SK-N-SH (cell line): ENCODE measurements at regions of chr17 and their contacts with region 1.

Region 1: GRCh38 chr17:82351716-82352488 is 7.1 kb upstream of the TEX19 start:
- DNase-seq: peak; percentile 97
- H3K4me3 ChIP-seq: no peak overlapping the region; a peak in 1 of 4 replicates
- H3K27ac ChIP-seq: no peak overlapping the region
- H3K4me1 ChIP-seq: peaks cover 0 to 10% of the 10 kb centered on the region in 2 experiments; a peak in 1 of 4 replicates
- H3K27me3 ChIP-seq: no peaks in the 10 kb centered on the region; the same call in 1 of the 2 replicates
- CTCF ChIP-seq: peak; percentile 99
- EP300 ChIP-seq: peak in 1 of 2 experiments; percentile 41; a peak in 1 of 4 replicates
- RAD21 ChIP-seq: peak; percentile 99

Region 2: DNA sequence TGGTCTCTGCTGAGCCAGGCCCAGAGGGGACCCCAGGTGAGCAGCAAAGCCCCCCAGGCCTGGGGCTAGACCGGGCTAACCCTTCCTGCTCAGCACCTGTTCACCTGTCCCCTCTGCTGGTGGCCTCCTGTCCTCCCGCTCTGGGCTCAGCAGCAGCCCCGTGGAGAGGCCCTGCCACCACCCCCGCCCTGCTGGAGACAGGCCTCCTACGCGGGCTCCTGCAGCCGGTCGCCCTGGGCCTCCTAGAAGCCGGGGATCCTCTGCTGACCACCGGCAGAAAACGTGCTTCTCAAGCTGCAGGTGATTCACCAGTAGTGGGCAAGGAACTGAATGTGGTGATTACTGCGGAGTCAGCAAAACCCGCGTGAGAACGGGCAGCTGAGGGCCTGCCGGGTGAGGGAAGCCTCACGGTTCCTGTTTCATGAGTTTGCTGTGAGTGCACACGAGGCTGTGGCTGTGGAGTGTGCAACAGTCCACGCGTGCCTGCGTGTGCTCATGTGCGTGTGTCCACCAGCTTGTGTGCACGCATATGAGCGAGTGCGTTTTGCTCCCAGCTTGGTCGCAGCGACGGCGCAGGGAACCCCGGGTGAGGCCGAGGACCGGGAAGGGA is 19.1 kb before region 1 on chr17:
- CTCF ChIA-PET with region 1: interaction called, 52 read pairs
- POLR2A ChIA-PET with region 1: no interaction called
- DNase-seq: peak; percentile 78
- H3K4me3 ChIP-seq: peak overlapping the region; percentile 13 to 31; a peak in 2 of 4 replicates
- H3K27ac ChIP-seq: no peak overlapping the region
- H3K4me1 ChIP-seq: peaks cover 18 to 45% of the 10 kb centered on the region in 2 experiments; a peak in 3 of 4 replicates
- H3K27me3 ChIP-seq: no peaks in the 10 kb centered on the region; the same call in none of the 2 replicates
- CTCF ChIP-seq: no peak
- EP300 ChIP-seq: no peak
- RAD21 ChIP-seq: no peak

Region 3: DNA sequence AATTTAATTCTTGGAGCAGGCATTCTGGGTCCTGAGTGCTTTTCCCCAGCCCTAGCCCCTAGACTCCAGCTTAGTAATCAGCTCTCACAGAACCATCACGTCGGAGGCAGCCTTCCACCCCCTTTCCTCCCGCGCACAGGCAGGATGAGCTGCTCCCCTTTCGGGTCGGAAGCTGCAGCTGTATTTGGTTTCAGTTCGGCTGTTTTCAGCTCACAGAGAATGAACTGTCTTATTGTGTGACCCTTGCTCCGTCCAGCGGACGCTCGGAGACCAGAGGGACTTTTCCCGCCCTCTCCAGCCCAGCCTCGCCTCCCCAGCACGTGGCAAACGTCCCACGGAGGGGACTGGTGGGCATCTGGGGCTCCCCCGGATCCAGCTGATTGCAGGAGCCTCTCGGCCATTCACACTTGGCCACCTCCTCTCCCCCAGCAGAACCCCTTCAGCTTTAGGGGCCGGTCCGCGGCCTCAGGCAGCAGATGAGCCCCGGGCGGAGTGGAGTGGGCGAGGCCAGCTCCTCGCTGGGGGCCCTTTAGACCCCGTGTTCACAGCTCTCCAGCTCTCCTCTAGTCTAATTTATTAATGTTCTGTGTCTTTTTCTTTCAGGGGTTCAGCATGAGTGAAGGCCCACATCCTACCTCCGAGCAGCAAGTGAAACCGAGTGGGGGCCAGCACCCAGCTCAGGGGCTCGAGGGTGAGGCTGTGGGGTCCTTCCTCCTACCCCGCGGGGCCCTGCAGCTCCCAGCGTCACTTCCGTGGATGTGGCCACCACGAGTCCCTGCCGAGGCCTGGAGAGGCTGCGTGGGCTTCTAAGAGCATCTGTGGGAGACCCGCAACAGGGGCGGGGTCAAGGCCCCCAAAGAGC is 18.8 kb after region 1 on chr17:
- CTCF ChIA-PET with region 1: interaction called, 20 read pairs
- POLR2A ChIA-PET with region 1: interaction called, 3 read pairs
- DNase-seq: peak; percentile 51
- H3K4me3 ChIP-seq: peak overlapping the region; percentile 4 to 51; a peak in 2 of 4 replicates
- H3K27ac ChIP-seq: no peak overlapping the region
- H3K4me1 ChIP-seq: peaks cover 3 to 18% of the 10 kb centered on the region in 2 experiments; a peak in 2 of 4 replicates
- H3K27me3 ChIP-seq: peaks cover 56% of the 10 kb centered on the region
- CTCF ChIP-seq: no peak
- EP300 ChIP-seq: no peak
- RAD21 ChIP-seq: no peak

Region 4: GRCh38 chr17:82408288-82408937 is 56.5 kb after region 1 on chr17:
- CTCF ChIA-PET with region 1: interaction called, 124 read pairs
- POLR2A ChIA-PET with region 1: no interaction called
- DNase-seq: no peak
- H3K4me3 ChIP-seq: no peak overlapping the region
- H3K27ac ChIP-seq: no peak overlapping the region
- H3K4me1 ChIP-seq: peaks cover 0 to 10% of the 10 kb centered on the region in 2 experiments; a peak in 1 of 4 replicates
- H3K27me3 ChIP-seq: no peaks in the 10 kb centered on the region
- CTCF ChIP-seq: no peak
- EP300 ChIP-seq: no peak
- RAD21 ChIP-seq: no peak

Region 5: GRCh38 chr17:82465023-82465603 is 113.2 kb after region 1 on chr17:
- CTCF ChIA-PET with region 1: no interaction called
- POLR2A ChIA-PET with region 1: no interaction called
- DNase-seq: no peak
- H3K4me3 ChIP-seq: no peak overlapping the region
- H3K27ac ChIP-seq: no peak overlapping the region
- H3K4me1 ChIP-seq: no peaks in the 10 kb centered on the region
- H3K27me3 ChIP-seq: no peaks in the 10 kb centered on the region
- CTCF ChIP-seq: no peak
- EP300 ChIP-seq: no peak
- RAD21 ChIP-seq: no peak

Region 6: GRCh38 chr17:82528484-82529265 is 176.8 kb after region 1 on chr17:
- CTCF ChIA-PET with region 1: interaction called, 12 read pairs
- POLR2A ChIA-PET with region 1: no interaction called
- DNase-seq: peak; percentile 88
- H3K4me3 ChIP-seq: no peak overlapping the region
- H3K27ac ChIP-seq: peak overlapping the region; percentile 47 to 63
- H3K4me1 ChIP-seq: peaks cover 25 to 34% of the 10 kb centered on the region in 2 experiments
- H3K27me3 ChIP-seq: no peaks in the 10 kb centered on the region
- CTCF ChIP-seq: peak; percentile 88
- EP300 ChIP-seq: no peak
- RAD21 ChIP-seq: peak; percentile 93